ENCODE measurements at regions of chr14 and their contacts with region 1.

Region 1: GRCh38 chr14:22491683-22492621 is 97.1 kb downstream of the DAD1 start:
- DNase-seq: peak in 4 of 9 experiments; percentile 43 to 83 (median 56)
- ATAC-seq: peak; percentile 43
- H3K4me3 ChIP-seq: peak overlapping the region; percentile 33 to 53
- H3K4me3 Mint-ChIP-seq: peak overlapping the region; percentile 84
- H3K27ac ChIP-seq: peak overlapping the region; percentile 32 to 77
- H3K27ac Mint-ChIP-seq: peak overlapping the region; percentile 99
- H3K4me1 ChIP-seq: no peaks in the 10 kb centered on the region
- H3K4me1 Mint-ChIP-seq: peaks cover 34% of the 10 kb centered on the region
- H3K27me3 ChIP-seq: no peaks in the 10 kb centered on the region
- H3K27me3 Mint-ChIP-seq: no peaks in the 10 kb centered on the region
- CTCF ChIP-seq: no peak

Region 2: DNA sequence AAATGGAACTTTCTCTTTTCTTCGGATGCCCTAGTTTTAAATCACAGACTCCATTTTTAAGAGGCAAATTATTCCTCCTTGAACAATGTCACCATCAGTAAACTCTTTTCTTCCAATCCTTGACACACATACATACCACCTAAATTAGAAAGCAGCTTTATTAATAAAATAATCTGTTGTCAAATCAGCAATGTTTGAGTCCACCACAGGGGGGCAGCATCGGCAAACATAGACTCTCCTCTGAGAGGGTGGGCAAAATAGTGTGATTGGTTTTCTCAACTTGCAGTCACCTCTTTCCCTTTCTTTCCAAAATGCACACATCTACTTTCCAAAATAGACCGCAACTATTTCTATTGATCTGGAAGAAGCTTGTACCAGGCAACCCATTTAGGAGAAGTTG is 379.9 kb before region 1 on chr14:
- CTCF ChIA-PET with region 1: interaction called, 3 read pairs
- POLR2A ChIA-PET with region 1: no interaction called
- intact Hi-C with region 1: loop called in 1 of 2 experiments (anchors 5 kb)
- DNase-seq: peak in 8 of 9 experiments; percentile 8 to 61 (median 50)
- ATAC-seq: peak; percentile 36
- H3K4me3 ChIP-seq: peak overlapping the region; percentile 31 to 37
- H3K4me3 Mint-ChIP-seq: peak overlapping the region; percentile 80
- H3K27ac ChIP-seq: no peak overlapping the region
- H3K27ac Mint-ChIP-seq: peak overlapping the region; percentile 88
- H3K4me1 ChIP-seq: no peaks in the 10 kb centered on the region
- H3K4me1 Mint-ChIP-seq: peaks cover 28% of the 10 kb centered on the region
- H3K27me3 ChIP-seq: peaks cover 0 to 2% of the 10 kb centered on the region in 2 experiments
- H3K27me3 Mint-ChIP-seq: no peaks in the 10 kb centered on the region
- CTCF ChIP-seq: peak; percentile 34

Region 3: DNA sequence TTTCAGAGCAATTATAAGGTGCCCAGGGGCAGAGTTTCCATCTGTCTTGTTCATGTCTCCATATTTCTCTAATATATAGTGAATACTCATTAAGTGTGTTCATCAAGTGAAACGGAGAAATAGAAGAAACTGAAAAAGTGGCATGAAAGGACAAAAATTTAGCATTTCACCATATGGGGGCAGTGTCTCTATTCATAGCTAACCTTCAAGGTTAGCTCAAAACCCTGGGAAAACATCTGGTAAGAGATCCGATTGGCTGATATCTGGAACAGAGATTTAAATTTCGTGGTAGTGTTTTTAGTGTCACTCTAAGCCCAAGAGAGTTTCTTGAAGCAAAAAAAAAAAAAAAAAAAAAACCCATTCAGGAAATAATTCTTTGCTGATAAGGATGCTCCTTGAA is 270.4 kb before region 1 on chr14:
- CTCF ChIA-PET with region 1: no interaction called
- POLR2A ChIA-PET with region 1: no interaction called
- intact Hi-C with region 1: loop called in 1 of 2 experiments (anchors 5 kb)
- DNase-seq: peak in 2 of 9 experiments; percentile 21 to 51
- ATAC-seq: no peak
- H3K4me3 ChIP-seq: peak overlapping the region in 1 of 2 experiments; percentile 8
- H3K4me3 Mint-ChIP-seq: peak overlapping the region; percentile 50
- H3K27ac ChIP-seq: no peak overlapping the region
- H3K27ac Mint-ChIP-seq: no peak overlapping the region
- H3K4me1 ChIP-seq: peaks cover 4% of the 10 kb centered on the region
- H3K4me1 Mint-ChIP-seq: peaks cover 12% of the 10 kb centered on the region
- H3K27me3 ChIP-seq: no peaks in the 10 kb centered on the region
- H3K27me3 Mint-ChIP-seq: no peaks in the 10 kb centered on the region
- CTCF ChIP-seq: no peak

Region 4: GRCh38 chr14:22303589-22304195 is 188.3 kb before region 1 on chr14:
- CTCF ChIA-PET with region 1: no interaction called
- POLR2A ChIA-PET with region 1: no interaction called
- intact Hi-C with region 1: loop called in 1 of 2 experiments (anchors 10 kb)
- DNase-seq: peak in 2 of 9 experiments; percentile 0 to 16
- ATAC-seq: no peak
- H3K4me3 ChIP-seq: no peak overlapping the region
- H3K4me3 Mint-ChIP-seq: peak overlapping the region; percentile 62
- H3K27ac ChIP-seq: no peak overlapping the region
- H3K27ac Mint-ChIP-seq: no peak overlapping the region
- H3K4me1 ChIP-seq: no peaks in the 10 kb centered on the region
- H3K4me1 Mint-ChIP-seq: no peaks in the 10 kb centered on the region
- H3K27me3 ChIP-seq: no peaks in the 10 kb centered on the region
- H3K27me3 Mint-ChIP-seq: no peaks in the 10 kb centered on the region
- CTCF ChIP-seq: no peak

Region 5: DNA sequence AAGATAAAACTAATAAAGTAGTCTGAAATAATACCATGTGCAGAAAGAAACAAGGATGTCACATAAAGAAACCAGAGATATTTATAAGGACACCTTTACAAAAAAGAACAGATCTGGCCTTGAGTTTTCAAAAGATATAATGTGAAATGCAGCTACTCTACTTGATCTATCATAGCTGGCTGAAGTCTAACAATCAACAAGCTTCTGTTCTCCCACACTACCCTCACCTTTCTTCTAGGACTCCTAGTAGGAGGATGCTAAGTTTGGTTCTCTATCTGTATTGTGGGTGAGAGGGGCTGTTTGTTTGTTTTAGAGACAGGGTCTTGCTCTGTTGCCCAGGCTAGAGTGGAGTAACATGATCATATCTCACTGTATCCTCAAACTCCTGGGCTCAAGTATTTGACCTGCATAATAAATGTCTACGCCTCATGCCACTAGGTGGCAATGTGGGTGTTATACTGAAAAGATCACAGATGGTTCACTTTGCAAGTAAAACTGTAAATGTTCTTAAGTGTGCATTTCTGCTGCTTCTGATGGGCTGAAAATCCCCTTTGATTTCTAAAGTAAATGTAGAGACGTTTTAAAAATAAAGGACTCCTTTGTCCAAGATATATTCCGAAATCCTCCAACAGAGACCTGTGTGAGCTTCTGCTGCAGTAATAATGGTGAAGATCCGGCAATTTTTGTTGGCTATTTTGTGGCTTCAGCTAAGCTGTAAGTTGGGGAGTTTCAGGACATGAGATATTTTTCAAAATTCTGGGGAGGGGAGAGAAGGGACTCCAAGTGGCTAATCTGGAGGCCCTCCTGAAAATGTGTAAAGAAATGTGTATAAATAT is 172.2 kb before region 1 on chr14:
- CTCF ChIA-PET with region 1: no interaction called
- POLR2A ChIA-PET with region 1: no interaction called
- intact Hi-C with region 1: loop called in 1 of 2 experiments (anchors 5 kb)
- DNase-seq: peak in 5 of 9 experiments; percentile 7 to 44 (median 20)
- ATAC-seq: peak; percentile 29
- H3K4me3 ChIP-seq: no peak overlapping the region
- H3K4me3 Mint-ChIP-seq: peak overlapping the region; percentile 67
- H3K27ac ChIP-seq: no peak overlapping the region
- H3K27ac Mint-ChIP-seq: peak overlapping the region; percentile 76
- H3K4me1 ChIP-seq: no peaks in the 10 kb centered on the region
- H3K4me1 Mint-ChIP-seq: no peaks in the 10 kb centered on the region
- H3K27me3 ChIP-seq: no peaks in the 10 kb centered on the region
- H3K27me3 Mint-ChIP-seq: no peaks in the 10 kb centered on the region
- CTCF ChIP-seq: no peak

Measured in CD8-positive, alpha-beta T cell (primary cell).